ENCODE measurements at regions of chr19 and their contacts with region 1.

Region 1: DNA sequence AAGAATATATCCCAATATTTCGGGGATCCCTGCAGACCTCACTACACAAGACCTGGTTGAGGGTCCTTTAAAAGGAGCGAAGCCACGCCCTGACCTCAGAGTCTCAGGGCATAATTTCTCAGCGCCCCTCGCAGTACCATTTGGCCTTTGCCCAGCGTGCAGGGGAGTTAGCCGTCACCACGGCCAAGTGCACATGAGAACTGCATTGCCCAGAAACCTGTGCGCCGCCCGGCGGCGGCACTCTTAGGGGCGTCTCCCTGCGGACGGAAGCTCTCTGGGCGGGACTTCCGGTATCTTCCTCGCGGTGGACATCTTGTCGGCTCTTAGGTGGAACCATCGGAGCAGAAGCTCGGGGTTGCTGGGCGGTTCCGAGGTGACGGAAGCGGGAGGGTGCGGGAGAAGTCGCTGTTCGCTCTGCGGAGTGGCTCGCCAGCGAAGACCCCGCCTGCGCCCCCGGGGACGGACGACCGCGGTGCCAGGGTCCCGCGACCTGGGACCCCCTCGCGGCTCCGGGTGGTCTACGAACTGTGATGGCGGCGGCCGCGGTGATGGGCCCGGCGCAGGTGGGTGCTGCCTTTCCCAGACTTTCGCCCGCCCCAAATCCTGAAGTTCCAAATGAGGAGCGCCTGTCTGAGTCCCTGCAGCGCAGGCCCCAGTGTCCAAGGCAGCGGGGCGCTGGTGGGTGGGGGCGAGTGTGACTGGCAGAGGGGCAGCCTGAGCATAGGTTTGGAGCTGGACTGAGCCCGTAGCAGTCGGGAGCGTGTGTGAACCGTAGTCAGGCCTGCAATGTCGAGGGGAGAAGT is at the start of gene ZNF134:
- DNase-seq: peak; percentile 85 to 95
- ATAC-seq: peak; percentile 96 to 100 (median 99)
- H3K4me3 ChIP-seq: peak within 1 kb of the TSS; percentile 87
- H3K4me3 Mint-ChIP-seq: peak within 1 kb of the TSS; percentile 86
- H3K27ac ChIP-seq: peak within 1 kb of the TSS; percentile 49
- H3K27ac Mint-ChIP-seq: peak within 1 kb of the TSS; percentile 59 to 73
- H3K4me1 ChIP-seq: peaks cover 19% of the 10 kb centered on the region
- H3K4me1 Mint-ChIP-seq: peaks cover 31 to 40% of the 10 kb centered on the region in 2 donors
- H3K27me3 ChIP-seq: no peaks in the 10 kb centered on the region
- H3K27me3 Mint-ChIP-seq: no peaks in the 10 kb centered on the region
- CTCF ChIP-seq: no peak
- total RNA-seq, gene ZNF134: 18.5 to 22.0 (median 20.5) TPM

Region 2: DNA sequence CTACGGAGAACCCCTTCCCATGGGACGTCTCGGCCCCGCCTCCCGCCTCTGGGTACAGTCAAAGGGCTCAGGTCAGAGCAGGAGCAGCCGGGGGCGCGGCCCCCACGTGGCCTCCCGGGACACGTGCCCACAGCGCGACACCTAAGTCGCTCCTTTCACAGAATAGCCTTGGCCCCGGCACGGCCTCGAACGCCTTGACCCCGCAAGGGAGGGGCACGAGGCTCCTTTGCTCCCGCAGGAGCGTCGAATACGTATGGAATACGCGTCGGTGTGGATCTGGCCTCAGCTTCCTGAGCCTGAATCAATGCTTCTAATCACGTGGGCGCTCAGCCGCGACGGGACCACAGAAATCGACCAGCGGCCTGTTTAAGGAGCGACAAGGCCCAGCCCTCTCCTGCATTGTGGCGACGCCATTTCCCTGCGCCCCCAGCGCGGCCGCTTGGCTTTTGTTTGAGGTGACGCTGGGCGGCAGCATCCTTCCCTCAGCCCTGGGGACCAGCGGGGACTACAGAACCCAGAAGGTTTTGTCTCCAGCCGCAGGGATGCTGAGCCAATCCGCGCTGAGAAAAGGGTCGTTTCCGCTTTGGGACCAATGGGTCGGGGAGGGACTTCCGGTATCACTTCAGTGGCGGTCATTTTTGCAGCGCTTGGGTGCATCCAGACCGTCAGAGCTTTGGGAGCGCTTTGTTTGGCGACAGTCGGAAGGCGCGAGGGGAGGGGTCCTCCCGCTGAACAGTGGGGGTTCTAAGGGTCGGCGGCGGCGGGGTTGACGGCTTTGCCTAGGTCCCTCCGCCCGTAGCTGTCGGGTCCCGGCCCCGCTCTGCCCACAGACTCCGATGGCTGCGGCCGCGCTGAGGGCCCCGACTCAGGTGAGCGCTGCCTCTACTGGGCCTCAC is 30.4 kb before region 1 on chr19 and contains the start of gene ZIK1:
- intact Hi-C with region 1: loop called (anchors 1 kb)
- DNase-seq: peak; percentile 79 to 95
- ATAC-seq: peak; percentile 90 to 94 (median 91)
- H3K4me3 ChIP-seq: peak within 1 kb of the TSS; percentile 68
- H3K4me3 Mint-ChIP-seq: peak within 1 kb of the TSS; percentile 92
- H3K27ac ChIP-seq: peak within 1 kb of the TSS; percentile 75
- H3K27ac Mint-ChIP-seq: peak within 1 kb of the TSS; percentile 72 to 88
- H3K4me1 ChIP-seq: peaks cover 17% of the 10 kb centered on the region
- H3K4me1 Mint-ChIP-seq: peaks cover 16 to 27% of the 10 kb centered on the region in 2 donors
- H3K27me3 ChIP-seq: no peaks in the 10 kb centered on the region
- H3K27me3 Mint-ChIP-seq: no peaks in the 10 kb centered on the region
- CTCF ChIP-seq: no peak
- total RNA-seq, gene ZIK1: 2.7 to 8.2 (median 6.5) TPM

Region 3: GRCh38 chr19:57632987-57633831 is 19.1 kb after region 1 on chr19 and contains the start of gene ZNF211:
- intact Hi-C with region 1: loop called (anchors 1 kb)
- DNase-seq: peak; percentile 89 to 94
- ATAC-seq: peak; percentile 99 to 100 (median 100)
- H3K4me3 ChIP-seq: peak within 1 kb of the TSS; percentile 83
- H3K4me3 Mint-ChIP-seq: peak within 1 kb of the TSS; percentile 94
- H3K27ac ChIP-seq: peak within 1 kb of the TSS; percentile 80
- H3K27ac Mint-ChIP-seq: peak within 1 kb of the TSS; percentile 87 to 91
- H3K4me1 ChIP-seq: peaks cover 13% of the 10 kb centered on the region
- H3K4me1 Mint-ChIP-seq: peaks cover 24 to 32% of the 10 kb centered on the region in 2 donors
- H3K27me3 ChIP-seq: no peaks in the 10 kb centered on the region
- H3K27me3 Mint-ChIP-seq: no peaks in the 10 kb centered on the region
- CTCF ChIP-seq: no peak
- total RNA-seq, gene ZNF211: 33.7 to 47.0 (median 36.9) TPM

Region 4: DNA sequence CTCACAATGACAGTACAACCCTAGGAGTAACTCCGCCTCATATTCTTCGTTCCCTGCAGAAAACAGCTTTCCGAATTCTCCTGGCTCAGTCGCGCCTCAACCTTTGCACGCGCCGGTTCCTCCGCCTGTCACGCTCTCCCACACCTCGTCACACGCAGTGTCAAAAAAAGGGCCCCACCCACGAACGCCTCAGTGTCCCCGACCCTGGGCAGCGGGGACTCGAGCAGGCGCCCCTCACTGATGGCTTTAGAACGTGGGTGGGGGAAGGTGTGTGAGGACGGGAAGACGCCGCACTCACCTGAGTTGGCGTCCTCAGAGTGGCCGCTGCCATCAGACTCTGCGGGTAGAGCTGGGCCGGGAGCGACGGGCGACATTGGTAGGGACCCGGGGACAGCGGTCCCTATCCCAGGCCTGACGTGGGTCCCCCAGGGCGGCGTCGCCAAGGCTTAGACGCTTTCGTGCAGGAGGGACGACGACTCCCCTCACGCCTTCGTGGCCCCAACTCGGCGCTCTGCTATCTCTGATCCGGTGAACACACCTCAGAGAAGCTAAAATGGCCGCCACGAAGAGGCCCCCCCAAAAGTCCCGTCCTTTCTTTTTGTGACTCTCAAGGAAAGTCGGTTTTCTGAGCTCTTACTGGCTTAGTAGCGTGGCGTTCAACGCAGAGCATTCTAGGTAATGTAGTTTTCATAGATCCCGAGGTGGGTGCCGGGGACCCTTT is 94.7 kb after region 1 on chr19 and contains the start of gene ZNF154:
- intact Hi-C with region 1: no loop called
- DNase-seq: peak; percentile 54 to 63
- ATAC-seq: peak; percentile 67 to 89 (median 87)
- H3K4me3 ChIP-seq: peak within 1 kb of the TSS; percentile 56
- H3K4me3 Mint-ChIP-seq: peak within 1 kb of the TSS; percentile 86
- H3K27ac ChIP-seq: peak within 1 kb of the TSS; percentile 90
- H3K27ac Mint-ChIP-seq: peak within 1 kb of the TSS; percentile 83 to 99
- H3K4me1 ChIP-seq: peaks cover 14% of the 10 kb centered on the region
- H3K4me1 Mint-ChIP-seq: peaks cover 7 to 53% of the 10 kb centered on the region in 2 donors
- H3K27me3 ChIP-seq: no peaks in the 10 kb centered on the region
- H3K27me3 Mint-ChIP-seq: no peaks in the 10 kb centered on the region
- CTCF ChIP-seq: no peak
- total RNA-seq, gene ZNF154: 4.2 to 21.6 (median 9.5) TPM